Posterior vena cava (tissue), 2 donors: ENCODE measurements at regions of chr12 and their contacts with region 1.

Region 1: DNA sequence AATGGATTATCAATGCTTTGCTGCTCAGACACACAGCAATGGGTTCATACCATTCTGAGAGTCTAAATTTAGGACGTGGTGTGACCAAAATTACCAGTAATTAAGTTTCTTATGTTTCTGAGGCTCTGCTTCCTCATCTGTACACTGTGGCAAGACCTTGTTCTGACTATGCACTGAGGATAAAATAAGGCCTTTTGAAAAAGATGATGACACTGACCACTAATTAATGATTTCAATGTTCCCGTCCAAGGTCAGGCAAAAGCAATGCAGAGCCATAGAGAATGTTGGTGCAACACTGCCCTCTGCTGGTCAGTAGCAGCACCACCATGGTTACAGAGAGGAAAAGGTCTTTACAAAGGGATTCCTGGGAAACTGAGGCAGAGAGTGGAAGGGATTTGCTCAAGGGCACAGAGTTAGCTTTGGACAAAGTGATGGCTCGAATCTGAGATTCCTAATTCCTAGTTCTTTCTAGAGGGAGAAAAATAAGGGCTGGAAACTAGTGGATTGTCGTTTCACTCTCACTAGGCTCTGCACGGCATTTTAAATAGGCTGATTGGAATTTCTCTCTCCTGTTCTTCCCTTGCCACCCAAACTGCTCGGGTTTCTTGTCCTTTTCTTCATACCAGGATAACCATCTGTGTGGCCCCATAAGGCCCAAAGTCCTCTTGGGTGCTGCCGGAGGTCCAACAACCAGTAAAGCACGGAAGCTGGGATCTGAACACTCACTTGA is 22.3 kb upstream of the P2RX7 start:
- DNase-seq: no peak

Region 2: DNA sequence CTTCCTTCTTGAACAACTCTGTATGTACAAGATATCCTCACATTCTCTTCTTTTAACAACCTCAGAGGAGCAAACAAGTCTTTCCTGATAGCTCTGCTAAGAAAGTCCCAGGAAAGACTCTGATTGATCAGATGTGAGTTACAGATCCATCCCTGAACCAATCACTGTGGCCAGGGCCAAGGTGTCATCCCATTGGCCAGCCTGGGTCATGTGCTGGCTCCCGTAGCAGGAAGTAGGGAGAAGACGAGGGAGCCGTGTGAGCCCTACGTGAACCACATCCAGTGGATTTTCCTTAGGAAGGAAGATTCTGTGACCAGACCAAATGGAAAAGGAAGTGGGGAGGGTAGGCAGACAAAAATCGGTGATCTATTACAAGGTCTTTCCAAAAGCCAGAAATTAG is 27.9 kb after region 1 on chr12:
- intact Hi-C with region 1: loop called in 1 of 2 experiments (anchors 1 kb)
- DNase-seq: no peak

Region 3: DNA sequence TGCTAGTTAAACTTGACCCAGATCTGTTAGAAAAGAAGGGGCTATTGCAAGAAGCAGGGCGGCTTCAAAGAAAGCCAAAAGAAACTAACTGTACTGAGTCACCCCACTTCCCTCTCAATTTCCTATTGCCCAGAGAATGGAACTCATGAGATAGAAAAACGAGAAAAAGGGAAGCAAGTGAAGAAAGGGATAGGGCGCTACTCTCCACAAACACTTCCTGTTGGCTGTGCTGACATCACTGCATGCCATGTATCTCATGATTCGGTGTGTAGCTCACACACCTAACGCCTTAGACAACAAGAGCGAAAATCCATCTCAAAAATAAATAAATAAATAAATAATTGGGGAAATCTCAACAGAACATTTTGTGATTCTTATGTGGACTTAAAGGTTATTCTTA is 86.5 kb after region 1 on chr12:
- intact Hi-C with region 1: no loop called
- DNase-seq: no peak

Region 4: GRCh38 chr12:121238604-121239350 is 128.4 kb after region 1 on chr12:
- intact Hi-C with region 1: loop called in 1 of 2 experiments (anchors 10 kb)
- DNase-seq: no peak